ENCODE measurements at regions of chrX and their contacts with region 1.

Region 1: GRCh38 chrX:68462653-68463052 is 29.4 kb upstream of the OPHN1 start:
- DNase-seq: no peak
- ATAC-seq: no peak
- H3K4me3 ChIP-seq: no peak overlapping the region
- H3K27ac ChIP-seq: no peak overlapping the region
- H3K4me1 ChIP-seq: no peaks in the 10 kb centered on the region
- H3K27me3 ChIP-seq: no peaks in the 10 kb centered on the region
- CTCF ChIP-seq: peak; percentile 56

Region 2: GRCh38 chrX:68196939-68197791 is 265.5 kb before region 1 on chrX:
- intact Hi-C with region 1: loop called (anchors 10 kb)
- DNase-seq: no peak
- ATAC-seq: peak; percentile 85
- H3K4me3 ChIP-seq: no peak overlapping the region
- H3K27ac ChIP-seq: no peak overlapping the region
- H3K4me1 ChIP-seq: no peaks in the 10 kb centered on the region
- H3K27me3 ChIP-seq: no peaks in the 10 kb centered on the region
- CTCF ChIP-seq: peak; percentile 64

Region 3: DNA sequence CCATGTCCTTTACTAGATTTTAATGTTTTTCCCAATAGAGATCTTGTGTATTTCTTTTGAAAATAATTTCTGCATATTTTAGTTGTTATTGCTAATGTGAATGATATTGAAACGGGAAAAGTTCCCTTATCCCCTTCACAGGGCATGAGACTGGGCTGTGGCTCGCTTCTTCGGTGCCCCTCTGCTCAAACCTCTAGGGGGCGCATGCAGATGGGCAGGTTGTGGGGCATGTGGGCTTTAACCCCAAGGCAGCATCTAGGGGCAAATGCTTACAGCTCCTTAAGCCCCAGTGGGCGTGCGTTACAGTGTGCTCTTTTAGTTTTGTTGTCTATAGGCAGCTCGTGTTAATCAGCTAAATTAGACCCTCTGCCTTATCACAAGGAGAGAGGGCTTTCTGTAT is 224.1 kb before region 1 on chrX:
- intact Hi-C with region 1: no loop called
- DNase-seq: no peak
- ATAC-seq: peak; percentile 54
- H3K4me3 ChIP-seq: no peak overlapping the region
- H3K27ac ChIP-seq: no peak overlapping the region
- H3K4me1 ChIP-seq: no peaks in the 10 kb centered on the region
- H3K27me3 ChIP-seq: no peaks in the 10 kb centered on the region
- CTCF ChIP-seq: peak; percentile 28

Region 4: GRCh38 chrX:68433155-68433980 is 29.3 kb before region 1 on chrX and contains the start of gene OPHN1:
- intact Hi-C with region 1: no loop called
- DNase-seq: peak; percentile 89
- ATAC-seq: peak; percentile 96
- H3K4me3 ChIP-seq: peak within 1 kb of the TSS; percentile 67
- H3K27ac ChIP-seq: peak within 1 kb of the TSS; percentile 85
- H3K4me1 ChIP-seq: no peaks in the 10 kb centered on the region
- H3K27me3 ChIP-seq: no peaks in the 10 kb centered on the region
- CTCF ChIP-seq: no peak
- total RNA-seq, gene OPHN1: 9.8 TPM

Region 5: DNA sequence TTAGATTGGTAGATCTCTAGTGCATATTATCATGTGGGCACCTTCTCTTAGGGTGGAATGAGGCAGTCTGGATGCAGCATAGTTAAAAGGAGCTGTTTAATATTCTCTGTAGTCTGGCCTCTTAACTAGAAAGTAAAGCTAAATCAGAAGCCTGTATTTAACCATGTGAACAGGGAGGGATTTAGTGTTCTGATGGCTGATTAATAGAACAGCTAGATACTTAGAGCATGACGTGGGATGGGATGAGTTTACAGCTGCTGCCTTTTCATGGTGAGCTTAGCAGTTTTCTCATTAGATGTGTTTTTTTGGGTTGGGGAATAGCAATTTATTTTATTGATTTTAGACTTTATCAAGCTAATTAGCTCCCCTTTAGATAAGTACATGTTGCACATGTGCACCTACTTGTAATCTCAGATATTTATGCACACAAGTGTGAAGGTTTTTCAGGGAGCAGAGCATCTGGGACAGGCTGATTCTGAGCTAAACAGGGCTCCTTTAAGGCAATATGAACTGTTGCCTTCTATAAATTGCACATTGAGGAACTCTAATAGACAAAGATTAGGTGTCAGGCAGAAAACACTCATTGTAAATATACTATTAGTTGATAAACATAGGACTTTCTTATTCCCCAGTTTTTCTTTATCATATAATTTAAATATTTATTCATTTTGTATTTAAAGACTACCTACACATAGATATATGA is 70.3 kb after region 1 on chrX:
- intact Hi-C with region 1: no loop called
- DNase-seq: no peak
- ATAC-seq: no peak
- H3K4me3 ChIP-seq: no peak overlapping the region
- H3K27ac ChIP-seq: no peak overlapping the region
- H3K4me1 ChIP-seq: no peaks in the 10 kb centered on the region
- H3K27me3 ChIP-seq: no peaks in the 10 kb centered on the region
- CTCF ChIP-seq: no peak

Region 6: GRCh38 chrX:68588602-68589371 is 126.1 kb after region 1 on chrX:
- intact Hi-C with region 1: no loop called
- DNase-seq: no peak
- ATAC-seq: no peak
- H3K4me3 ChIP-seq: no peak overlapping the region
- H3K27ac ChIP-seq: no peak overlapping the region
- H3K4me1 ChIP-seq: no peaks in the 10 kb centered on the region
- H3K27me3 ChIP-seq: no peaks in the 10 kb centered on the region
- CTCF ChIP-seq: no peak

Measured in upper lobe of right lung (tissue), 1 donor.